Mammary epithelial cell (primary cell): ENCODE measurements at regions of chr3 and their contacts with region 1.

Region 1: DNA sequence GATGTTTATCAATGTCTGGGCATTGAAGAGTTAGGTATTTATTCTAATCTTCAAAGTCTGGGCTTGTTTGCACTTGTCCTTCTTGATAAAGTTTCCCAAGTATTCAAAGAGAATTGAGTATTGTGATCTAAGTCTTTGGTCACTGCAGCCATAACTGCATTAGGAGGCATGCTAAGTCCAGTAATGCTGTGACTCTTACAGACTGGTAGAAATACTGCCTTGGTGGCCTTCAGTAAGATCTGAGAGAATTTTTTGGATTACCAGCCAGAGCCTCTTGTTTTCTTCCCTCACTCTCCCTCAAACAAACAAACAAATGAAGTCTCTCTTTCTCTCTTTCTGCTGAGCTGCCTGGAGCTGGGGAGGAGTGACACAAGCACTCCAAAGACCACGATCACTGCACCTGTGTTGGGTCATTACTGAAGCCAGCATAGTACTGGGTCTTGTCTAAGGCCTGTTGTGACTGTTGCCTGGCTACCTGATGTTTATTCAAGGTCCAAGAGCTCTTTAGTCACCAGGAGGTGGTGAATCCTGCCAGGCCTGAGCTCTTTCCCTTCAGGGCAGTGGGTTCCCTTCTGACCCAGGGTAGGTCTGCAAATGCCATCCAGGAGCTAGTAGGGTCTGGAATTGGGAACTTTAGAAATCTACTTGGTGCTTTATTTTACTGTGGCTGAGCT is 14.8 kb upstream of the RBP2 start:
- DNase-seq: peak; percentile 49
- H3K4me3 ChIP-seq: no peak overlapping the region
- H3K27ac ChIP-seq: no peak overlapping the region
- H3K4me1 ChIP-seq: peaks cover 7% of the 10 kb centered on the region
- H3K27me3 ChIP-seq: no peaks in the 10 kb centered on the region
- CTCF ChIP-seq: no peak

Region 2: DNA sequence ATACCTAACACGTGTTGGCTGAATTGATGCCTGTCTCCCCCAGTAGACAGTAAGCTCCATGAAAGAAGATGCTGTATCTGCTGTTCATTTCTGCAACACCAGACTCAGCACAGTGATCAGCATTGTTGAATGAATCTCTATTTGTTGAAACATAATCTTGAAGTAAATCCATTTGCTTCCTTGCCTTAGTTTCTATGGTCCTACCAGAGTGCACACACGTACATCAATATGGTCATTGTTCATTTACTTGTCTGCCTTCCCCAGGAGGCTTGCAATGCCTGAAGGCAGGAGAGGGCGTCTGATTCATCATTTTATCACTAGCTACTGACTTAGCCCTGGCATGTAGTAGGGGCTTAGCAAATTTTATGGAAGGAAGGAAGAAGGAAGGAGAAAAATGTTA is 34.1 kb before region 1 on chr3:
- CTCF ChIA-PET with region 1: interaction called, 13 read pairs
- dilution Hi-C with region 1: no loop called
- in situ Hi-C with region 1: no loop called
- intact Hi-C with region 1: no loop called
- DNase-seq: peak; percentile 79
- H3K4me3 ChIP-seq: no peak overlapping the region
- H3K27ac ChIP-seq: no peak overlapping the region
- H3K4me1 ChIP-seq: peaks cover 29% of the 10 kb centered on the region
- H3K27me3 ChIP-seq: no peaks in the 10 kb centered on the region
- CTCF ChIP-seq: no peak